ENCODE measurements at regions of chr17 and their contacts with region 1.

Region 1: DNA sequence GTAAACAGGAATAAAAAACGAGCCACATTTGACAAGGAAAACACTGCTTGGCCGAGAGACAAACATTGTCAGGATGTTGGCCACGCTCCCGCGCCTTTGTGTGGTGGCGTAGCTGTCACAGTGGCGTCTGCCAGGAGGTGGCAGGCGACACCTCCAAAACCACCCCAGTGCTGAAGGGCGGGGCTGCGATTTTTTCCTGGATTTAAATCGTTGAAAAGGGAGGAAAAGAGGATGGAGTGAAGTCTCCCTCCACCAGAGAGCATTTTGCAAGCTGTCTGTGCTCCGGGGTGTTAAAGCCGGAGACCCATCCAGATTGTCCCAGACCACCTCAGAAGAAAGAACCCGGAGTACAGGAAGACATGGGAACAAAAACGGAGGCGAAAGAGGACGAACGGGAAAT is 12.7 kb downstream of the MRM3 start:
- DNase-seq: peak; percentile 37
- H3K4me3 ChIP-seq: no peak overlapping the region
- H3K27ac ChIP-seq: no peak overlapping the region
- H3K4me1 ChIP-seq: peaks cover 25% of the 10 kb centered on the region
- H3K27me3 ChIP-seq: no peaks in the 10 kb centered on the region
- CTCF ChIP-seq: peak; percentile 48 to 75

Region 2: GRCh38 chr17:823501-823902 is 28.6 kb after region 1 on chr17:
- CTCF ChIA-PET with region 1: no interaction called
- dilution Hi-C with region 1: no loop called
- in situ Hi-C with region 1: no loop called
- intact Hi-C with region 1: no loop called
- DNase-seq: no peak
- H3K4me3 ChIP-seq: no peak overlapping the region
- H3K27ac ChIP-seq: no peak overlapping the region
- H3K4me1 ChIP-seq: no peaks in the 10 kb centered on the region
- H3K27me3 ChIP-seq: no peaks in the 10 kb centered on the region
- CTCF ChIP-seq: no peak

Region 3: GRCh38 chr17:869567-870525 is 75.0 kb after region 1 on chr17:
- CTCF ChIA-PET with region 1: no interaction called
- dilution Hi-C with region 1: loop called (anchors 5 kb)
- in situ Hi-C with region 1: no loop called
- intact Hi-C with region 1: loop called (anchors 5 kb)
- DNase-seq: peak; percentile 96
- H3K4me3 ChIP-seq: peak overlapping the region; percentile 14 to 36 (median 30)
- H3K27ac ChIP-seq: peak overlapping the region; percentile 89
- H3K4me1 ChIP-seq: peaks cover 17% of the 10 kb centered on the region
- H3K27me3 ChIP-seq: no peaks in the 10 kb centered on the region
- CTCF ChIP-seq: peak in 1 of 2 donors; percentile 8

Region 4: GRCh38 chr17:896953-897661 is 102.2 kb after region 1 on chr17:
- CTCF ChIA-PET with region 1: no interaction called
- dilution Hi-C with region 1: loop called (anchors 5 kb)
- in situ Hi-C with region 1: no loop called
- intact Hi-C with region 1: no loop called
- DNase-seq: no peak
- H3K4me3 ChIP-seq: no peak overlapping the region
- H3K27ac ChIP-seq: no peak overlapping the region
- H3K4me1 ChIP-seq: peaks cover 8% of the 10 kb centered on the region
- H3K27me3 ChIP-seq: no peaks in the 10 kb centered on the region
- CTCF ChIP-seq: no peak

Region 5: GRCh38 chr17:1216217-1217088 is 421.6 kb after region 1 on chr17:
- CTCF ChIA-PET with region 1: no interaction called
- dilution Hi-C with region 1: no loop called
- in situ Hi-C with region 1: no loop called
- intact Hi-C with region 1: no loop called
- DNase-seq: no peak
- H3K4me3 ChIP-seq: no peak overlapping the region
- H3K27ac ChIP-seq: no peak overlapping the region
- H3K4me1 ChIP-seq: no peaks in the 10 kb centered on the region
- H3K27me3 ChIP-seq: peaks cover 3% of the 10 kb centered on the region
- CTCF ChIP-seq: no peak

Region 6: GRCh38 chr17:1323336-1323735 is 528.5 kb after region 1 on chr17:
- CTCF ChIA-PET with region 1: no interaction called
- dilution Hi-C with region 1: no loop called
- in situ Hi-C with region 1: no loop called
- intact Hi-C with region 1: no loop called
- DNase-seq: no peak
- H3K4me3 ChIP-seq: no peak overlapping the region
- H3K27ac ChIP-seq: no peak overlapping the region
- H3K4me1 ChIP-seq: no peaks in the 10 kb centered on the region
- H3K27me3 ChIP-seq: no peaks in the 10 kb centered on the region
- CTCF ChIP-seq: no peak

Measured in mammary epithelial cell (primary cell).